Mammary epithelial cell (primary cell): ENCODE measurements at regions of chr1 and their contacts with region 1.

Region 1: DNA sequence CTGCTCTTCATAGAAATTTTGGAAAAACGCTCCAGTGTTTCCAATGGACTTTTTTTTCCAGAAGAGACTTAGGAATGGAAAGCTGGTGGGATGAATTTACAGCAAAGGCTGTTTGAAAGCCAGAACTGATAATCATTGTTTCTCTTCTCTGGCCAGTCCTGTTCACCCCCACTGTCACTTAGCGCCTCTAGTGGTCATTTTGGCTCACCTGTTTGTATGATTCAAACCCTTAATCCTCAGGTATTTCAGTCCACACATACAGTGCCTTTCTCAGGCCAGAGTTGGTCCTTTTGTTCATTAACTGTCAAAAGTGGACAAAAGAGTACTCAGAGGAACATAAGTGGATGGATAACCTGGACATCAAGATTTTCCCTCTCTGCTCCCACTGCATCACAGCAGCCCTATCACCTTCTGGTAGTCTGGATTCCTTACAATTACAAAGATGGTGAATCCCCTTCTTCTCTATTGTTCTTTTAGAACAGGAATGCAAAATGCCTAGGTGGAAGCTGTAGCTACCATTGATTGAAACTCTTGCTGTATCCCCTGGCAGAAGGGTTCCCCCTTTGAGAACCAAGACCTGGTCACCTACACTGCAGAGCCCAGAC is 177.6 kb upstream of the OLFM3 start:
- DNase-seq: peak; percentile 13
- H3K4me3 ChIP-seq: no peak overlapping the region
- H3K27ac ChIP-seq: no peak overlapping the region
- H3K4me1 ChIP-seq: no peaks in the 10 kb centered on the region
- H3K27me3 ChIP-seq: no peaks in the 10 kb centered on the region
- CTCF ChIP-seq: peak; percentile 62 to 70

Region 2: DNA sequence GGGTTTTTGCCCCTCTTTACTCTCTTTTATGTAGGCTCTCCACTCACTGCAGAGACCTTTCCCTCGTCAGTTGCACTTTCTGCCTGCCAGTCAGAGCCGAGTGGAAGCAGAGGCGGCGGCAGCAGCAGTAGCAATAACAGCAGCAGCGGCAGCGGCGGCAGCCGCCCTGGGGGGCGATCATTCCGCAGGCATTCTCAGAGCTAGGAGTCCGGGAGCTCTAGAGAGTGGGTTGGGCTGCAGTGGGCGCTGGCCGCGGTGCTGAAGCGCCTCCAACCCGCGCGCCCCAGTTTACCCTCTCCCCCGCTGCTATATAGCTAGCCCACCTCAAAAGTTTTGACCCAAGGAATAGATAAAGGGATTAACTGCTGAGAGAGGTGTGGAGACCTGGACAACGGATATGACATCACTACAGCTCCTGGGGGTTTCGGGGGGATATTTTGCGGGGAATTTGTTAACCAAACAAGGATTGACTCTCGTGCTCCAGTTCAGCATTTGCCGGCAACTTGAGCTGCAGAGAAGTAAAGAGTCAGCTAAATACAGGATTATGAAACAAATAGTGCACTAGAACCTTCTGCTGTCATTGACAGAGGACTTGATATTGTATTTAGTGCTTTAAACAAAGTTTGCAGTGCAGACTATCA is 177.4 kb before region 1 on chr1 and contains the start of gene OLFM3:
- CTCF ChIA-PET with region 1: interaction called, 3 read pairs
- dilution Hi-C with region 1: no loop called
- in situ Hi-C with region 1: loop called (anchors 25 kb)
- intact Hi-C with region 1: loop called (anchors 5 kb)
- DNase-seq: peak; percentile 20
- H3K4me3 ChIP-seq: no peak within 1 kb of the TSS
- H3K27ac ChIP-seq: no peak within 1 kb of the TSS
- H3K4me1 ChIP-seq: no peaks in the 10 kb centered on the region
- H3K27me3 ChIP-seq: peaks cover 14% of the 10 kb centered on the region
- CTCF ChIP-seq: no peak
- total RNA-seq, gene OLFM3: not detected

Region 3: GRCh38 chr1:102002057-102002456 is 172.3 kb before region 1 on chr1:
- CTCF ChIA-PET with region 1: interaction called, 3 read pairs
- dilution Hi-C with region 1: no loop called
- in situ Hi-C with region 1: loop called (anchors 25 kb)
- intact Hi-C with region 1: loop called (anchors 5 kb)
- DNase-seq: no peak
- H3K4me3 ChIP-seq: no peak overlapping the region
- H3K27ac ChIP-seq: no peak overlapping the region
- H3K4me1 ChIP-seq: no peaks in the 10 kb centered on the region
- H3K27me3 ChIP-seq: peaks cover 2% of the 10 kb centered on the region
- CTCF ChIP-seq: no peak

Region 4: DNA sequence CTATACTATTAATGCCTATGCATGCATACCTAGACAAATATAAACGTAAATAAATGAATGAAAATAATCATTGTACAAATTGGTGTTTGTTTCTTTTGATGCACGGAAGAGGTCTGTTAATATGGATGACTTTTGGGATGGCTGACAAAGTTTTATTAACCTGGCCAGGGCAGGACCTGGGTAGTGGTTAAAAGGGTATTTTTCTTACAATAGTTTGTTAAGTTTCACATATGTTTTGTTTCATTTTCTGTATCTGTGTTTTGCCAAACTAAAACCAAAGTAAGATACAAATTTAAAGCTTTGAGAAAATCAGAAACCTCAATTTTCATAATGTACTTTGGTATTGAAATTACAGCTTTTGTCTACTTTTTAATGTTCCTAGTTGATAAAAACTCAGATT is 45.1 kb after region 1 on chr1:
- CTCF ChIA-PET with region 1: no interaction called
- dilution Hi-C with region 1: no loop called
- in situ Hi-C with region 1: no loop called
- intact Hi-C with region 1: no loop called
- DNase-seq: no peak
- H3K4me3 ChIP-seq: no peak overlapping the region
- H3K27ac ChIP-seq: no peak overlapping the region
- H3K4me1 ChIP-seq: no peaks in the 10 kb centered on the region
- H3K27me3 ChIP-seq: no peaks in the 10 kb centered on the region
- CTCF ChIP-seq: no peak